Activated naive CD8-positive, alpha-beta T cell treated with anti-CD3 and anti-CD28 coated beads, Interleukin-2, amount 10 ng/mL, durations not matched to agents 7 days and 5 days (primary cell): ENCODE measurements at regions of chr19 and their contacts with region 1.

Region 1: DNA sequence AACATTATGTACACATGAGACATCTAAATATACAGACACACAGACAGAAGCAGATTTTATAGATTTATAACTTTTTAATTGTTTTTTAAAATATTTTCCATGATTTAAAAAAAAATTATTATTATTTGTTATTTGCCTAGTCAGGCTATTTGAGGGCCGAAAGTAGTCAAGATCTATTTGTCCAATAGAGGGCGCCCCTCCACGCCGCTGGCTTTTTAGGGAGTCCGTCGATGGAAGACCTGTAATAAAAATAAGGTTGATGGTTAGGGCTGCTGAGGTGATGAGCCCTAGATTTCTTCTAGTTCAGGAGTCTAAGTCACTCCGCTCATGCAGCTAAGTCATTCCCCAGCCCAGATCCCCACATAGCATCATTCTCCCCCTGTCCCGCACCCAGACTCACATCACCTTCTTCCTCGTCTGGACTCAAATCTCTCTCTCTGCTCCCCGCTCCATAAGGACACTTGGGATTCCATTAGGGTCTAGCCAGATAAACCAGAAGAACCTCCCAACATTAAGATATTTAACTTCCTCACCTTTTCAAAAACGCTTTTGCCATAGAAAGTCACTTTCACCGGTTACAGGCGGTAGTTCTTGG is 33.9 kb upstream of the CEACAM21 start:
- DNase-seq: peak; percentile 76
- ATAC-seq: no peak
- H3K4me3 Mint-ChIP-seq: peak overlapping the region; percentile 33
- H3K27ac Mint-ChIP-seq: peak overlapping the region; percentile 78
- H3K4me1 Mint-ChIP-seq: peaks cover 51% of the 10 kb centered on the region
- H3K27me3 Mint-ChIP-seq: no peaks in the 10 kb centered on the region

Region 2: DNA sequence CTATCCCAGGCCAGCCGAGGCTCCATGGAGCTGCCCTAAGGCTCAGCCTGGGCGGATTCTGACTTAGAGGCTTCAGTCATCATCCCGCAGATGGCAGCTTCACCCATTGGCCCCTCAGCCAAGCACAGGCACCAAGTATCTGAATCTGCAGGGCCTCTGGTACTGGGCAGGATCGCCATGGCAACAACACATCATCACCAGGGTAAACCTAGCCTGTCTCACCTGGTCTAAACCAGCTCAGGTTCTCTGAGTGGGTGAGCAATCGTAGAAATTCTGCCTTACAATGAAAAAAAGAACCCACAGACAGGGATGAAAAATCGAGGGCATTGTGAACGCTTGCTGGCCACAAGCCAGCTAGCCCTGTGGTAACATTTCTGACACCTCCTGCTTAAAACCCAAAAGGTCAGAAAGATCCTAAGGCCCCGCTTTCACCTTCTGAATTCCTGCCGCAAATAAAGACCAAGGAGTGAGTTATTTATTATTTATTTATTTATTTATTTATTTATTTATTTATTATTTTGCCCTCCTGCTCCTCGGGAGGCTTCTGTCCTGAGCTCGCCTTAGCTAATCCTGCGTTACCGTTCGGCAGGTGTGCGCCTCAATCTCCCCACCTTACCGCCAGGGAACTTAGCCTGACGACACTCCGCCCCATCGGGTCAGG is 21.9 kb after region 1 on chr19:
- POLR2A ChIA-PET with region 1: interaction called, 275 read pairs
- DNase-seq: no peak
- ATAC-seq: peak; percentile 59
- H3K4me3 Mint-ChIP-seq: peak overlapping the region; percentile 73
- H3K27ac Mint-ChIP-seq: peak overlapping the region; percentile 54
- H3K4me1 Mint-ChIP-seq: peaks cover 56% of the 10 kb centered on the region
- H3K27me3 Mint-ChIP-seq: no peaks in the 10 kb centered on the region

Region 3: GRCh38 chr19:41668315-41668714 is 126.2 kb after region 1 on chr19:
- POLR2A ChIA-PET with region 1: no interaction called
- DNase-seq: no peak
- ATAC-seq: no peak
- H3K4me3 Mint-ChIP-seq: no peak overlapping the region
- H3K27ac Mint-ChIP-seq: no peak overlapping the region
- H3K4me1 Mint-ChIP-seq: no peaks in the 10 kb centered on the region
- H3K27me3 Mint-ChIP-seq: peaks cover 11% of the 10 kb centered on the region